ENCODE measurements at regions of chr6 and their contacts with region 1.

Region 1: DNA sequence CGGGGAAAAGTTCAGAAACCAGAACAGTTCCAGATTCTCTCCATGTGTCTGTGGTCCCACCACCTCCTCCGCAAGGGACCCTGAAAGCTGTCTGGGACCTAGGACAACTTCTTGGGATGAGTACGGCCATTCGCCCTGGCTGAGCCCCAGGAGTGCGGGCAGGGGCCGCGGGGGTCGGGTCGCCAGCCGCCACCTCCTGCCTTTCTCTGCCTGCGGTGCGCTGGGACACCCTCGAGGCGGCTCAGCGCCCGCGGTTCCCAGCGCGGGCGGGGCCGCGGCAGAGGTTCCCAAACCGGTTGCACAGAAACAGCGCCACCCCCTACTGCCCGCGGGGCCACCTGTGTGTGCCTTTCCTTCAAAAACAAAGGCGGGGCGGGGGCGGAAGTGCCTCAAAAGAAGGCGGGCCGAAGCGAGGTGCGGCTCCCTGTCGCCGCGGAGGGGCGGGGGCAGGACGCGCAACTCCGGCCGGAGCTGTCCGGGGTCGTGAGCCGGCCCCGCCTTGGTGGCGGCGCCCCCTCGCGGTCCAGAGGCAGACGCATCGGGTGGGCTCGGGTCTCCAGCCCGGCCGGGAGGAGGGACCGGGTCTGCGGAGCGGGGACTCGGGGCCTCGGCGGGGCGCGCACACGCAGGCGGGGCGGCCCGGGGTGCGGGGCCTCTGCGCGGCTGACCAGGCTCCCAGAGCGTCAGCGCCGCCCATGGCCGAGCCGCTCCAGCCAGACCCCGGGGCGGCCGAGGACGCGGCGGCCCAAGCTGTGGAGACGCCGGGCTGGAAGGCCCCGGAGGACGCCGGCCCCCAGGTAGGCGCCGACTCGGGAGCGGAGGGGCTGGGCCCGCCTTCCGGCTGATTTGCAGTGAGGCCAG is at the start of gene HEBP2:
- DNase-seq: peak; percentile 77 to 95 (median 90)
- ATAC-seq: peak; percentile 94
- H3K4me3 ChIP-seq: peak within 1 kb of the TSS; percentile 98
- H3K4me3 Mint-ChIP-seq: peak within 1 kb of the TSS; percentile 78 to 93 (median 86)
- H3K27ac ChIP-seq: peak within 1 kb of the TSS; percentile 76
- H3K27ac Mint-ChIP-seq: peak within 1 kb of the TSS; percentile 70 to 95 (median 89)
- H3K4me1 ChIP-seq: peaks cover 12 to 14% of the 10 kb centered on the region in 2 donors
- H3K4me1 Mint-ChIP-seq: peaks cover 6 to 43% (median 32%) of the 10 kb centered on the region in 7 donors
- H3K27me3 ChIP-seq: no peaks in the 10 kb centered on the region
- H3K27me3 Mint-ChIP-seq: peaks cover 0 to 22% (median 0%) of the 10 kb centered on the region in 5 donors
- total RNA-seq, gene HEBP2: 24.9 to 50.7 (median 48.2) TPM

Region 2: GRCh38 chr6:137707590-137708360 is 696.3 kb before region 1 on chr6:
- CTCF ChIA-PET with region 1: no interaction called
- POLR2A ChIA-PET with region 1: no interaction called
- intact Hi-C with region 1: loop called in 1 of 2 experiments (anchors 5 kb)
- DNase-seq: peak; percentile 44 to 94 (median 89)
- ATAC-seq: peak; percentile 86
- H3K4me3 ChIP-seq: peak overlapping the region; percentile 6
- H3K4me3 Mint-ChIP-seq: peak overlapping the region in 9 of 10 donors; percentile 38 to 82 (median 66)
- H3K27ac ChIP-seq: peak overlapping the region; percentile 79
- H3K27ac Mint-ChIP-seq: peak overlapping the region; percentile 88 to 99 (median 97)
- H3K4me1 ChIP-seq: peaks cover 26 to 37% of the 10 kb centered on the region in 2 donors
- H3K4me1 Mint-ChIP-seq: peaks cover 23 to 74% (median 40%) of the 10 kb centered on the region in 7 donors
- H3K27me3 ChIP-seq: no peaks in the 10 kb centered on the region
- H3K27me3 Mint-ChIP-seq: peaks cover 0 to 5% (median 0%) of the 10 kb centered on the region in 5 donors

Region 3: GRCh38 chr6:138109042-138109997 is 294.7 kb before region 1 on chr6:
- CTCF ChIA-PET with region 1: no interaction called
- POLR2A ChIA-PET with region 1: no interaction called
- intact Hi-C with region 1: loop called (anchors 2 to 5 kb)
- DNase-seq: peak; percentile 47 to 77 (median 68)
- ATAC-seq: peak; percentile 84
- H3K4me3 ChIP-seq: no peak overlapping the region
- H3K4me3 Mint-ChIP-seq: peak overlapping the region in 4 of 10 donors; percentile 2 to 45 (median 7)
- H3K27ac ChIP-seq: no peak overlapping the region
- H3K27ac Mint-ChIP-seq: no peak overlapping the region
- H3K4me1 ChIP-seq: peaks cover 8 to 10% of the 10 kb centered on the region in 2 donors
- H3K4me1 Mint-ChIP-seq: peaks cover 14 to 27% (median 20%) of the 10 kb centered on the region in 7 donors
- H3K27me3 ChIP-seq: peaks cover 0 to 6% of the 10 kb centered on the region in 2 donors
- H3K27me3 Mint-ChIP-seq: peaks cover 34 to 56% (median 47%) of the 10 kb centered on the region in 5 donors

Region 4: DNA sequence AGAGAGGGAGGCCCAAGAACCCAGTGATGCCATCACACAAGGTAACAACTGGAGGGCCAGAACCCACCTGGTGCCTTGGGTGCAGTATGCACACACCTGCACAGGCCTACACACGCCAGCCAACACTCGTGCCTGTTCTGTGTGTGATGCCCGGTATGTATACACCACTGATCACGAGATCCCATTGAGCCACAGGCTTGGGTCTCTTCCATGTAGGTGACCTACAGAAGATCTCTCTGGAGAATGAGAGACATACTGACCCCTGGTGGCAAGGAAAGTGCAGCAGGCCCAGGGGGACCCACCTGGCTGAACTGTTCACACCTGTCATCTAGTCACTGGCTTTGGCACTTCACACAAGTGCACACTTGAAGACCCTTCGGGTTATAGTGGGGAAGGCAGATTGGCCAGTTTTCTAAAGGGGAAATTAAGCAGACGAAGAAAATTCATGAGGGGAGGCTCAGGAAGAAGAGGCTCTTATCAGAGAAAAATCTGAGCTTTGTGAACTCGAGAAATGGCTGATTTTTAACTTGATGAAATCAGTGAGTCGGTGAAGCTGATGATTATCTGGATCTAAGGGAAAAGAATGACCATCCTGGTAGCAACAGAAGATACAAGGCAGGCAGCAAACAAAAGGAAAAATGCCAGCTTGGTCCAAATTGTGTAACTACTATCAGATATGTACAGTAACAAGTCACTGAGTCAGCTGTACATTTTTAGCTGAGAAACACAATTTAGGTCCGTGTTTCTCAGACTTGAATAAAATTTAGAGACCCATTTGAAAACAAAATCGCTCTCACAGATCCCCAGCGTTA is 116.7 kb before region 1 on chr6:
- CTCF ChIA-PET with region 1: interaction called, 4 read pairs
- POLR2A ChIA-PET with region 1: no interaction called
- intact Hi-C with region 1: loop called in 1 of 2 experiments (anchors 1 kb)
- DNase-seq: peak in 8 of 9 donors; percentile 15 to 43 (median 26)
- ATAC-seq: peak; percentile 44
- H3K4me3 ChIP-seq: no peak overlapping the region
- H3K4me3 Mint-ChIP-seq: no peak overlapping the region
- H3K27ac ChIP-seq: no peak overlapping the region
- H3K27ac Mint-ChIP-seq: no peak overlapping the region
- H3K4me1 ChIP-seq: no peaks in the 10 kb centered on the region
- H3K4me1 Mint-ChIP-seq: no peaks in the 10 kb centered on the region
- H3K27me3 ChIP-seq: no peaks in the 10 kb centered on the region
- H3K27me3 Mint-ChIP-seq: peaks cover 0 to 4% (median 0%) of the 10 kb centered on the region in 5 donors

Region 5: DNA sequence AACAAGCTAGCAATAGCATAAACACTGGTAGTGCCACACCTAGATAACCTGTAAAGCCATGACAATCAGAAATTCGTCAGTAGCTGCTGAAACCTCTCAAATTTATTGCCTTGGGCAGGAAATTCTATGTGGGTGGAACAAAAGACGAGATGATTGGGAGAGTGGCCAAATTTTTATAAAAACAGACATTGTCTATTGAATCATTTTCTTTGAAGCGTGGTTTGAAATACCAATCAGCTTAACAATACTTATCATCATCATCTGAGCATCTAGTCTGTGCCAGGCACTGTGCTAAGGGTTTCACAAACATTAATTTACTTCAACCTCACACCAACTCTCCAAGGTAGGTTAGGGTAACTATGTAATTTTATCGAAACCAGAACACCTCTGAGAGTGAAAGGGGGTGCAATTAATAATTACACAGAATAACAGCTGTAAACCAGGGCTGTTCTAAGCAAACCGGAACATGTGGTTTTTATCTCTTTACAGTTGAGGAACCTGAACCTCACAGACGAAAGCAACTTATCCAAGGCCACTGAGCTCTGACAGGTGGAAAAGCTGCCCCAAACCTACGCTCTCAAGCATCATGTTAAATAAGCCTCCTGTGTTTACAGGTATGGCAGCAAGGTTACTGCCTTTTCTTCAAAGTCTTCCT is 51.8 kb after region 1 on chr6:
- CTCF ChIA-PET with region 1: interaction called, 6 read pairs
- POLR2A ChIA-PET with region 1: interaction called, 18 read pairs
- intact Hi-C with region 1: loop called in 1 of 2 experiments (anchors 1 kb)
- DNase-seq: peak in 7 of 9 donors; percentile 51 to 81 (median 75)
- ATAC-seq: peak; percentile 86
- H3K4me3 ChIP-seq: peak overlapping the region; percentile 48
- H3K4me3 Mint-ChIP-seq: peak overlapping the region; percentile 40 to 79 (median 70)
- H3K27ac ChIP-seq: peak overlapping the region; percentile 75
- H3K27ac Mint-ChIP-seq: peak overlapping the region; percentile 77 to 97 (median 93)
- H3K4me1 ChIP-seq: peaks cover 19 to 22% of the 10 kb centered on the region in 2 donors
- H3K4me1 Mint-ChIP-seq: peaks cover 5 to 32% (median 22%) of the 10 kb centered on the region in 7 donors
- H3K27me3 ChIP-seq: no peaks in the 10 kb centered on the region
- H3K27me3 Mint-ChIP-seq: peaks cover 0 to 3% (median 0%) of the 10 kb centered on the region in 5 donors

Region 6: GRCh38 chr6:138773177-138774091 is 369.4 kb after region 1 on chr6 and contains the start of gene CCDC28A:
- CTCF ChIA-PET with region 1: no interaction called
- POLR2A ChIA-PET with region 1: no interaction called
- intact Hi-C with region 1: loop called (anchors 1 kb)
- DNase-seq: peak; percentile 86 to 98 (median 97)
- ATAC-seq: peak; percentile 93
- H3K4me3 ChIP-seq: peak within 1 kb of the TSS; percentile 94
- H3K4me3 Mint-ChIP-seq: peak within 1 kb of the TSS; percentile 91 to 100 (median 99)
- H3K27ac ChIP-seq: peak within 1 kb of the TSS; percentile 87
- H3K27ac Mint-ChIP-seq: peak within 1 kb of the TSS; percentile 96 to 100 (median 100)
- H3K4me1 ChIP-seq: peaks cover 6 to 10% of the 10 kb centered on the region in 2 donors
- H3K4me1 Mint-ChIP-seq: peaks cover 4 to 39% (median 36%) of the 10 kb centered on the region in 7 donors
- H3K27me3 ChIP-seq: no peaks in the 10 kb centered on the region
- H3K27me3 Mint-ChIP-seq: no peaks in the 10 kb centered on the region
- total RNA-seq, gene CCDC28A: 19.9 to 34.2 (median 25.6) TPM

Measured in naive thymus-derived CD4-positive, alpha-beta T cell (primary cell).